Gastrocnemius medialis (tissue), 4 donors: ENCODE measurements at regions of chr22 and their contacts with region 1.

Region 1: GRCh38 chr22:36194971-36195370 is 6.6 kb downstream of the APOL4 start:
- DNase-seq: peak; percentile 24 to 53
- ATAC-seq: peak in 1 of 2 donors; percentile 82
- H3K4me3 ChIP-seq: no peak overlapping the region
- H3K27ac ChIP-seq: no peak overlapping the region
- H3K4me1 ChIP-seq: peaks cover 5 to 8% of the 10 kb centered on the region in 2 donors
- H3K27me3 ChIP-seq: no peaks in the 10 kb centered on the region
- CTCF ChIP-seq: peak; percentile 55 to 75 (median 60)
- POLR2A ChIP-seq: no peak

Region 2: GRCh38 chr22:36123673-36124630 is 71.0 kb before region 1 on chr22:
- in situ Hi-C with region 1: no loop called
- intact Hi-C with region 1: no loop called
- DNase-seq: peak; percentile 85 to 91
- ATAC-seq: peak; percentile 96 to 98
- H3K4me3 ChIP-seq: peak overlapping the region; percentile 29 to 44 (median 40)
- H3K27ac ChIP-seq: peak overlapping the region; percentile 77 to 84 (median 83)
- H3K4me1 ChIP-seq: peaks cover 0 to 4% of the 10 kb centered on the region in 2 donors
- H3K27me3 ChIP-seq: no peaks in the 10 kb centered on the region
- CTCF ChIP-seq: peak; percentile 96 to 99 (median 98)
- POLR2A ChIP-seq: peak in 1 of 2 donors; percentile 24

Region 3: GRCh38 chr22:36221799-36222751 is 27.1 kb after region 1 on chr22:
- in situ Hi-C with region 1: no loop called
- intact Hi-C with region 1: loop called (anchors 2 kb)
- DNase-seq: peak in 1 of 2 donors; percentile 40
- ATAC-seq: no peak
- H3K4me3 ChIP-seq: no peak overlapping the region
- H3K27ac ChIP-seq: no peak overlapping the region
- H3K4me1 ChIP-seq: peaks cover 12 to 15% of the 10 kb centered on the region in 2 donors
- H3K27me3 ChIP-seq: no peaks in the 10 kb centered on the region
- CTCF ChIP-seq: peak; percentile 27 to 69 (median 56)
- POLR2A ChIP-seq: no peak

Region 4: GRCh38 chr22:36239401-36240171 is 44.6 kb after region 1 on chr22 and contains the start of gene APOL2:
- in situ Hi-C with region 1: no loop called
- intact Hi-C with region 1: loop called (anchors 2 kb)
- DNase-seq: peak; percentile 87 to 93
- ATAC-seq: peak; percentile 97 to 98
- H3K4me3 ChIP-seq: peak within 1 kb of the TSS; percentile 64 to 87 (median 76)
- H3K27ac ChIP-seq: peak within 1 kb of the TSS; percentile 88 to 97 (median 93)
- H3K4me1 ChIP-seq: peaks cover 36 to 48% of the 10 kb centered on the region in 2 donors
- H3K27me3 ChIP-seq: no peaks in the 10 kb centered on the region
- CTCF ChIP-seq: peak; percentile 49 to 82 (median 71)
- POLR2A ChIP-seq: peak; percentile 74 to 83
- total RNA-seq, gene APOL2: 8.7 to 25.5 (median 20.9) TPM

Region 5: DNA sequence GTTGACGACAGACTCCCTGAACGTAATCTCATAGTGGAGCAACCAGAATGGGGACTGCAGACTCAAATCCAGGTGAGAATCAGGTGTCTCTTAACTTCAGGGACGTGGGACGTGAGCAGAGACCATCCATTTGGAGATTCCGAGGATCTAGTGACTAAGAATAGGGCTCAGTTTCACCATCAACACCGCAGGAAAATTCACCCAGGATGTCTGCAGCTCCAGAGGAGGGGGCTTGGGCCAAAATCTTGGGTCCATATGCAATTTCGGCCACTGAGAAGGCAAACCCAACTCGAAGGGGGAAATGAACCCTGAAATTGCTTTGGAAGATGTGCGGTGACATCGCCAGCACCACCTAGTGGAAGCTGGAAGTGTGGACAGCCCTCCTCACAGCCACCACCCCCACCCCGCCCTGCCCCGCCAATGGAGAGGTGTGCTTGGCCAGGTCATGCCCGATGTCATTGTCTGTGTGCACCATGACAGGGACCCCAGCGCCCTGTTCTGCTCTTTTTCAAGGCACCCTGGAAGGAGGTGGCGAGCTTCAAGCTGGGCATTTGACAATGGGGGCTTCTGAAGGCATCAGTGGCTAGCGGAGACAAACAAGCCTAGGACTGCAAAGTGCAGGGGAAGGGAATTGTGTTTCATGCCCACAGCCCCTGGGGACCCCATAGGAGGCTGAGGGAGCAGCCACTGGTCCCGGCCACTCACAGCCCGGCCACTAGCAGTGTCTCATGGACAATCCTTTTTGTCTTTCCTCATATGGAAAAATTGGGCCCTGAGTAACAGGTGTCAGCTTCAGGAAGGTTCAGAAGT is 82.7 kb after region 1 on chr22:
- in situ Hi-C with region 1: loop called in 2 of 4 experiments (anchors 5 to 10 kb)
- intact Hi-C with region 1: loop called (anchors 1 kb)
- DNase-seq: peak in 1 of 2 donors; percentile 41
- ATAC-seq: peak; percentile 54 to 74
- H3K4me3 ChIP-seq: no peak overlapping the region
- H3K27ac ChIP-seq: no peak overlapping the region
- H3K4me1 ChIP-seq: peaks cover 0 to 6% of the 10 kb centered on the region in 2 donors
- H3K27me3 ChIP-seq: no peaks in the 10 kb centered on the region
- CTCF ChIP-seq: peak; percentile 35 to 85 (median 68)
- POLR2A ChIP-seq: no peak

Region 6: DNA sequence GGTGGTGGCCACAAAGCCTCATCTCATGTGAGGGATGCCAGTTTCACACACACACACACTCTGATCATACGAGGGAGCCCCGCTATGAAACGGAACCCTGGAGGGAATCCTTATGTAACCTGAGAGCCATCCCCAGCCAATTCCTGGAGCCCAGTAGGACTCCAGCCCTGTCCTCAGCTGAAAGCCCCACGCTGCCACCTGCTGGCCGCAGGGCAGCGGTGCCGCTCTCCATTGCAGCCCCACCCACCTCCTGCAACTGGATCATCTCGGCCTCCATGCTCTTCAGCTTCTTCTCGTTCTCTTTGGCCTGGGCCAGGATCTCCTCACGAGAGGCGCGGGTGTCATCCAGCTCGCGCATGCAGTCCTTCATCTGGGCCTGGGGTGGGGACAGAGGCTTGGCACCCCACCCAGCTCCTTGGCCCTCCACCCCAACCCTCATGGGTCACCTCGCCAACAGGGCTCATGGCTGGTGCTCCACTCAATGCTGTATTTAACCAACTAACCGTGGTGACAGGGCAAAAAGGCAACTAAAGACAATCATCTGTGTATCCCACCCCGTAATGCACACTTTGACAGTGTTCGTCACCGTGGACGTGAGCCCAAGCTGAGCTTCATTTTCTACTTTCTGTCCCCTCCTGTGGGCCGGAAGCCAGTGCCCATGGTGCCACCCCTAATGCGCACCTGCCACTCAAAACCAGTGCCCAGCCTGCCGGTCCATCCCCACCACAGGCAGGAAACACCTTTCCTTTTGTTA is 91.7 kb after region 1 on chr22:
- in situ Hi-C with region 1: no loop called
- intact Hi-C with region 1: loop called (anchors 2 kb)
- DNase-seq: peak; percentile 47 to 82
- ATAC-seq: peak; percentile 85 to 95
- H3K4me3 ChIP-seq: no peak overlapping the region
- H3K27ac ChIP-seq: peak overlapping the region; percentile 4 to 61 (median 46)
- H3K4me1 ChIP-seq: peaks cover 10 to 11% of the 10 kb centered on the region in 2 donors
- H3K27me3 ChIP-seq: no peaks in the 10 kb centered on the region
- CTCF ChIP-seq: peak; percentile 88 to 97 (median 92)
- POLR2A ChIP-seq: no peak